CD8-positive, alpha-beta T cell (primary cell): ENCODE measurements at regions of chr6 and their contacts with region 1.

Region 1: DNA sequence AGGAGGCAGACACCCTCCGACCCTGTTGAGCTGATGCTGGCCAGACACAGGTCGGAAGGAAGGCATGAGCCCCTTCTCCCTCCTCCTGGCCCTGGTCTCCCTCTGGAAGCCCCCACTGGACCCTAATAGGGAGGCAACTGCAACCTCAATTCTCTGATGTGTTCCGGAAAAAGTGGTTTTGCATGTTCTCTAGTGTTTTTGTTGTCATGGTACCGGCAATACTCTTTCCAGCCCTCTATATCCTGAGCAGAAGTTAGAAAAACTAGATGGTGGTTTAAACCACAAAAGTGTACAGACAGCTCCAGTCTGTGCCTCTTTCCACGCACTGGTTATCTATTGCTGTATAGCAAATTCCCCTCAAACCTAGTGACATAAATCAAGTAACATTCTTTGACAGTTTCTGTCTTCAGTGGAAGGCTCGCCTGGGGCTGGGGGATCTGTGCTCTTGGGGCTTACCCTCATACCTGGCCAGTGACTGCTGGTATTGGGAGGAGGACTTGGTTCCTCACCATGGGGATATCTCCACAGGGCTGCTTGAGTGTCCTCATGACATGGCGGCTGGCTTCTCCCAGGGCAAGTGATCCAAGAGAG is 37.0 kb downstream of the SYTL3 start:
- DNase-seq: peak in 8 of 9 experiments; percentile 29 to 94 (median 60)
- ATAC-seq: peak; percentile 88
- H3K4me3 ChIP-seq: peak overlapping the region; percentile 6 to 21
- H3K4me3 Mint-ChIP-seq: peak overlapping the region; percentile 73
- H3K27ac ChIP-seq: peak overlapping the region; percentile 75 to 79
- H3K27ac Mint-ChIP-seq: peak overlapping the region; percentile 97
- H3K4me1 ChIP-seq: peaks cover 48% of the 10 kb centered on the region
- H3K4me1 Mint-ChIP-seq: peaks cover 62% of the 10 kb centered on the region
- H3K27me3 ChIP-seq: no peaks in the 10 kb centered on the region
- H3K27me3 Mint-ChIP-seq: no peaks in the 10 kb centered on the region
- CTCF ChIP-seq: no peak

Region 2: GRCh38 chr6:158220786-158221442 is 466.0 kb before region 1 on chr6:
- CTCF ChIA-PET with region 1: interaction called, 6 read pairs
- POLR2A ChIA-PET with region 1: no interaction called
- intact Hi-C with region 1: loop called (anchors 2 kb)
- DNase-seq: peak; percentile 48 to 84 (median 75)
- ATAC-seq: peak; percentile 91
- H3K4me3 ChIP-seq: no peak overlapping the region
- H3K4me3 Mint-ChIP-seq: no peak overlapping the region
- H3K27ac ChIP-seq: no peak overlapping the region
- H3K27ac Mint-ChIP-seq: no peak overlapping the region
- H3K4me1 ChIP-seq: no peaks in the 10 kb centered on the region
- H3K4me1 Mint-ChIP-seq: peaks cover 3% of the 10 kb centered on the region
- H3K27me3 ChIP-seq: no peaks in the 10 kb centered on the region
- H3K27me3 Mint-ChIP-seq: no peaks in the 10 kb centered on the region
- CTCF ChIP-seq: peak; percentile 99

Region 3: GRCh38 chr6:158631678-158632537 is 55.0 kb before region 1 on chr6:
- CTCF ChIA-PET with region 1: interaction called, 45 read pairs
- POLR2A ChIA-PET with region 1: interaction called, 5 read pairs
- intact Hi-C with region 1: loop called (anchors 1 kb)
- DNase-seq: peak in 1 of 9 experiments; percentile 40
- ATAC-seq: no peak
- H3K4me3 ChIP-seq: no peak overlapping the region
- H3K4me3 Mint-ChIP-seq: no peak overlapping the region
- H3K27ac ChIP-seq: peak overlapping the region in 1 of 2 experiments; percentile 40
- H3K27ac Mint-ChIP-seq: peak overlapping the region; percentile 87
- H3K4me1 ChIP-seq: peaks cover 23% of the 10 kb centered on the region
- H3K4me1 Mint-ChIP-seq: peaks cover 55% of the 10 kb centered on the region
- H3K27me3 ChIP-seq: no peaks in the 10 kb centered on the region
- H3K27me3 Mint-ChIP-seq: no peaks in the 10 kb centered on the region
- CTCF ChIP-seq: no peak

Region 4: GRCh38 chr6:158644231-158645063 is 42.4 kb before region 1 on chr6 and contains the start of gene DYNLT1:
- CTCF ChIA-PET with region 1: interaction called, 57 read pairs
- POLR2A ChIA-PET with region 1: interaction called, 14 read pairs
- intact Hi-C with region 1: loop called in 1 of 2 experiments (anchors 1 kb)
- DNase-seq: peak; percentile 77 to 92 (median 85)
- ATAC-seq: peak; percentile 67
- H3K4me3 ChIP-seq: peak within 1 kb of the TSS; percentile 77 to 84
- H3K4me3 Mint-ChIP-seq: peak within 1 kb of the TSS; percentile 97
- H3K27ac ChIP-seq: peak within 1 kb of the TSS; percentile 93 to 94
- H3K27ac Mint-ChIP-seq: peak within 1 kb of the TSS; percentile 96
- H3K4me1 ChIP-seq: peaks cover 49% of the 10 kb centered on the region
- H3K4me1 Mint-ChIP-seq: peaks cover 63% of the 10 kb centered on the region
- H3K27me3 ChIP-seq: no peaks in the 10 kb centered on the region
- H3K27me3 Mint-ChIP-seq: no peaks in the 10 kb centered on the region
- CTCF ChIP-seq: no peak
- total RNA-seq, gene DYNLT1: 109 TPM

Region 5: GRCh38 chr6:158660333-158660754 is 26.5 kb before region 1 on chr6:
- CTCF ChIA-PET with region 1: interaction called, 91 read pairs
- POLR2A ChIA-PET with region 1: interaction called, 8 read pairs
- intact Hi-C with region 1: loop called (anchors 1 kb)
- DNase-seq: peak in 8 of 9 experiments; percentile 22 to 78 (median 64)
- ATAC-seq: peak; percentile 77
- H3K4me3 ChIP-seq: no peak overlapping the region
- H3K4me3 Mint-ChIP-seq: peak overlapping the region; percentile 19
- H3K27ac ChIP-seq: no peak overlapping the region
- H3K27ac Mint-ChIP-seq: peak overlapping the region; percentile 80
- H3K4me1 ChIP-seq: peaks cover 28% of the 10 kb centered on the region
- H3K4me1 Mint-ChIP-seq: peaks cover 58% of the 10 kb centered on the region
- H3K27me3 ChIP-seq: no peaks in the 10 kb centered on the region
- H3K27me3 Mint-ChIP-seq: no peaks in the 10 kb centered on the region
- CTCF ChIP-seq: peak; percentile 73

Region 6: DNA sequence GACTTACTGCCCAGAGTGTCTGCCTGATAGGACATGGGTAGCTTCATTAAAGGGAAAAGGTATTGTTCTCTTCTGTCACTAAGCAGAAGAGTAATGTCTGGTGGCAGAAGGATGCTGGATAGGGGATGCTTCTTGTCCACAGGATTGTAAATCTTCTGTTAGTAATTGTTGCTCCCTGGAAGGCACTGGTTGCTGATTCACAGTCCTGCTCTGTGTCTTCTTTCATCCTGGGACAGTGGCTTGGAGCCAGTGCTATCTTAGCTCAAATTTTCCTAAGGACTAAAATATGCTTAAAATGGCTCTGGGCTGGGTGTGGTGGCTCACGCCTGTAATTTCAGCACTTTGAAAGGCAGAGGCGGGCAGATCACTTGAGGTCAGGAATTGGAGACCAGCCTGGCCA is 10.9 kb after region 1 on chr6:
- CTCF ChIA-PET with region 1: interaction called, 17 read pairs
- POLR2A ChIA-PET with region 1: interaction called, 5 read pairs
- intact Hi-C with region 1: no loop called
- DNase-seq: no peak
- ATAC-seq: no peak
- H3K4me3 ChIP-seq: no peak overlapping the region
- H3K4me3 Mint-ChIP-seq: no peak overlapping the region
- H3K27ac ChIP-seq: no peak overlapping the region
- H3K27ac Mint-ChIP-seq: no peak overlapping the region
- H3K4me1 ChIP-seq: no peaks in the 10 kb centered on the region
- H3K4me1 Mint-ChIP-seq: peaks cover 2% of the 10 kb centered on the region
- H3K27me3 ChIP-seq: no peaks in the 10 kb centered on the region
- H3K27me3 Mint-ChIP-seq: no peaks in the 10 kb centered on the region
- CTCF ChIP-seq: no peak

Region 7: DNA sequence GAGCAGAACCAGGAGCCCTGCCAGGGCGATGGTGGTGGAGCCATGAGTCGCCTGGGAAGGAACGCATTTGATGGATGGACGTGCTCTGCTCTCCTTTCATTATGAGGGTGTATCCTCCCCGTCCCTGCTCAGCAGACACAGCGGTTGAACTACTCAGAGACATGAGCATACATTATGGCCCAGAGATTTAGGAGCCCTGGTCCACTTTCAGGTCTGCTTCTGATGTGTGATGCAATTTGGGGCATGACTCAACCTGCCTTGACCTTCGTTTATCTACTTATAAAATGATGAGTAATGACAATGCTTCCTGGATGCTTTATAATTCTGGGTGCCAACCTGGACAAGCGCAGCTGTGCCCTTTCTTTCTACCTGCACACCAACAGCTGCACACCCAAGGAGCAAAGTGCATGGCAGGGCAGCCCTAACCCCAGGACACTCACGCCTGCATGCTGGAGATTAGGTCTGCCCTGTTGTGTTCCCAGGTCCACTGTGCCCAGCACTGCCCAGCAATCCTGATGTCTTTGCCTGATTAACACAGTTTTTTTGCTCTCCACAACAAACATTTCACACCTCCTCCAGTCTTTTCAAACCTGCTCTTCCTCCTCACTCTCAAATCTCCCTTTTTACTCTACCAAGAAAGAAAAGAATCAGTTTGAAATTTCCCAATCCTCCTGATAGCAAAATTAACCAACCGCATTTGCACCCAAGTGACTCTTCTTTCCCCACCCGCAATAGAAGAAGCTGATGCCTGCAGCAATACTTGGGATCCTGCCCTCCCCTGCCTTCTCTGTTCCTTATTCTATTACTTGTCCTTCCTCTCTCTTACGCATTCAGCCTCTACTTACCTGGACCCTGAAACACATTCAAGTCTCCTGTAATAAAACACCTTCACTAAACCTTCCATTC is 51.1 kb after region 1 on chr6:
- CTCF ChIA-PET with region 1: no interaction called
- POLR2A ChIA-PET with region 1: no interaction called
- intact Hi-C with region 1: no loop called
- DNase-seq: no peak
- ATAC-seq: no peak
- H3K4me3 ChIP-seq: no peak overlapping the region
- H3K4me3 Mint-ChIP-seq: no peak overlapping the region
- H3K27ac ChIP-seq: no peak overlapping the region
- H3K27ac Mint-ChIP-seq: no peak overlapping the region
- H3K4me1 ChIP-seq: no peaks in the 10 kb centered on the region
- H3K4me1 Mint-ChIP-seq: no peaks in the 10 kb centered on the region
- H3K27me3 ChIP-seq: no peaks in the 10 kb centered on the region
- H3K27me3 Mint-ChIP-seq: no peaks in the 10 kb centered on the region
- CTCF ChIP-seq: no peak